Right ventricle myocardium superior (tissue), 1 donor: ENCODE measurements at regions of chrX and their contacts with region 1.

Region 1: GRCh38 chrX:38206036-38206435 is 14.6 kb downstream of the SRPX start:
- DNase-seq: no peak
- ATAC-seq: no peak

Region 2: GRCh38 chrX:38275615-38276014 is 69.6 kb after region 1 on chrX:
- intact Hi-C with region 1: loop called (anchors 10 kb)
- DNase-seq: no peak
- ATAC-seq: no peak